Activated CD4-positive, alpha-beta T cell treated with anti-CD3 and anti-CD28 coated beads for 36 hours (primary cell): ENCODE measurements at regions of chr19 and their contacts with region 1.

Region 1: DNA sequence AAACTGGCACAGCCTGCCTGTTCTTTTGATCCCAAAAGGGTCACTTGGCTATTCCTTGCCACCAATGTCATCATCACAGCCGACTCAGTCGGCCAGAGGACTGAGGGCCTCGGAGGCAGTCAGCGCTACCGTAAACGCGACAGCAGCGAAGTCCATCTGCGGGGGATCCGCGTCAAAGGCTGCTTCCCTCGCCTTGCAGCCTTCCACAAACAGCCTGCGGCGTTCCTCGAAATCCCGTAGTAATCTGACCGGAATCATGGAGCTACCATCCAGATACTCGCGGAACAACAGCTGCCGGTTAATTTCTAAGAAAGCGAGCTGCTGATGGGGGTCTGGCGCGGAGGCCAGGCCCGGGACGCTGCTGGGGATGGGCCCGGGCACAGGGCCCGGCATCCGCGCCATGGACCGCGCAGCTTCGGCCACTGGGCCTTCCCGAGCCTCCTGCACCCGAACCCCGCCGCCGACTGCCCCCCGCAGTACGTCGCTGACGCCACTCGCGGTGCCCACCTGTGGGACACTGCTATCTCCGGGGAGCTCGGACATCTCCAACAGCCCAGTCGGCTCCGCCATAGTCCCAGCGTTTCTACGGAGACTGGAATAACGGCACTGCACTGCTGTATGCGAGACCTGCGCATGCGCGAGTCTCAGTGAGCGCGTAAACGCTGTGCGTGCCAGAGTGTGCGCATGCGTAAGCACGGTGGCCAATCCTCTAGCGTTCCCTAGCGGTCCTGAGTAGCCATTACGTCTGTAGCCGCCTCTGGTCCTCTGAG is at the start of gene EID2B:
- DNase-seq: peak; percentile 97
- ATAC-seq: peak; percentile 97
- H3K4me3 Mint-ChIP-seq: peak within 1 kb of the TSS; percentile 93
- H3K27ac Mint-ChIP-seq: peak within 1 kb of the TSS; percentile 86
- H3K4me1 Mint-ChIP-seq: peaks cover 26% of the 10 kb centered on the region
- H3K27me3 Mint-ChIP-seq: no peaks in the 10 kb centered on the region
- total RNA-seq, gene EID2B: 1.4 to 3.5 TPM

Region 2: GRCh38 chr19:39212375-39212742 is 320.1 kb before region 1 on chr19:
- CTCF ChIA-PET with region 1: interaction called, 3 read pairs
- POLR2A ChIA-PET with region 1: no interaction called
- intact Hi-C with region 1: loop called in 1 of 2 experiments (anchors 5 kb)
- DNase-seq: peak; percentile 86
- ATAC-seq: peak; percentile 100
- H3K4me3 Mint-ChIP-seq: no peak overlapping the region
- H3K27ac Mint-ChIP-seq: no peak overlapping the region
- H3K4me1 Mint-ChIP-seq: no peaks in the 10 kb centered on the region
- H3K27me3 Mint-ChIP-seq: peaks cover 9% of the 10 kb centered on the region

Region 3: GRCh38 chr19:39390755-39391592 is 141.4 kb before region 1 on chr19 and contains the starts of genes MED29 and PAF1:
- CTCF ChIA-PET with region 1: interaction called, 10 read pairs
- POLR2A ChIA-PET with region 1: no interaction called
- intact Hi-C with region 1: loop called in 1 of 2 experiments (anchors 1 kb)
- DNase-seq: peak; percentile 98
- ATAC-seq: peak; percentile 97
- H3K4me3 Mint-ChIP-seq: peak within 1 kb of the TSS; percentile 99
- H3K27ac Mint-ChIP-seq: peak within 1 kb of the TSS; percentile 98
- H3K4me1 Mint-ChIP-seq: peaks cover 28% of the 10 kb centered on the region
- H3K27me3 Mint-ChIP-seq: no peaks in the 10 kb centered on the region
- total RNA-seq, gene MED29: 24.0 to 34.6 TPM
- total RNA-seq, gene PAF1: 40.4 to 54.2 TPM

Region 4: DNA sequence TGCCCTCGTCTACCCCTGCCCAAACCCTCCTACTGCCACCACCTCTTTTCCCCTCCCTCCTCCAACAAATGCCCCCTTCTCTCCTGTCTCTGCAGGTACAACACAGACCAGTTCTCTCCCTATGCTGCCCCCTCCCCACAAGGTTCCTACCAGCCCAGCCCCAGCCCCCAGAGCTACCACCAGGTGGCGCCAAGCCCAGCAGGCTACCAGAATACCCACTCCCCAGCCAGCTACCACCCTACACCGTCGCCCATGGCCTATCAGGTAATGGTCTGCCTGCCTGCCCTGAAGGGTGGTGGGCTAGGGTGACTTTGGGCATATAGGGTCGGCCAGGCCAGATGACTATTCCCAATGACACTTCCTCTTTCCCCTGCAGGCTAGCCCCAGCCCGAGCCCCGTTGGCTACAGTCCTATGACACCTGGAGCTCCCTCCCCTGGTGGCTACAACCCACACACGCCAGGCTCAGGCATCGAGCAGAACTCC is 58.2 kb before region 1 on chr19:
- CTCF ChIA-PET with region 1: interaction called, 27 read pairs
- POLR2A ChIA-PET with region 1: interaction called, 3 read pairs
- intact Hi-C with region 1: loop called (anchors 1 kb)
- DNase-seq: peak; percentile 84
- ATAC-seq: peak; percentile 84
- H3K4me3 Mint-ChIP-seq: no peak overlapping the region
- H3K27ac Mint-ChIP-seq: no peak overlapping the region
- H3K4me1 Mint-ChIP-seq: peaks cover 17% of the 10 kb centered on the region
- H3K27me3 Mint-ChIP-seq: no peaks in the 10 kb centered on the region

Region 5: DNA sequence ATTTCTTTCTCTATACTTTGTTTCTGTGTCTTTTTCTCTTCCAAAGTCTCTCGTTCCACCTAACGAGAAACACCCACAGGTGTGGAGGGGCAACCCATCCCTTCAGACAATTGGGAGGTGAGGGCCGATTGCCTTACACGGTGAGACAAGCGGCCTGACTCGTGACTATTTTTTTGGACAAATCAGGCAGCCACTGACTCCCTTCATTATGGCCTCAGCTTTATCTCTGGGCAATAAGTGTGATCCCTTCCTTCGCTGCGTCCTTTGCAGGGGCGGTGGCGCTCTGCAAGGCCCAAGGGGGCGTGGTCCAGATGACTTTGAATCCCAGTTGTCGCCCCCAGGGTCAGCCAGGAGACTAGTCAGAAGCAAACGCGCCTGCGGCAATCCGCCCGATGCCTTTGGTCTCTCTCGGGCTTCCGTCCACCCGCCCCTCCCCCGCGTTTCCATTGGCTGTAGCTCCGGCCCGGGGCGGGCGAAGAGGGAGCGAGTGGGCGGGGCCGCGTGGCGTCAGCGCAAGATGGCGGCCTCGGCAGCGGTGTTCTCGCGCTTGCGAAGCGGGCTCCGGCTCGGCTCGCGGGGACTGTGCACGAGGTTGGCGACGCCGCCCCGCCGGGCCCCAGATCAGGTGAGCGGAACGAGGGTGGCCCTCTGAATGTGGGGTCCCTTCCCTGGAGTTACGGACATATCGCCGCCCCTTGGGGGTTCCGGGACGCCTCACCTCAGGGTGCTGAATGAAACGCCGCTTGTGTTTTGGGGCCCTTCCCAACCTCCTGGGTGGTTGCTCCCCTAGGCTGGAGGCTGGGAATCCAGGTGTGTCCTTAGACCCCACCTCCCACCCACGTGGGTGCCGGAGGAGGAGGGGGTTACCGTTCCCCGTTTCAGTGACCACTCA is 51.8 kb before region 1 on chr19 and contains the start of gene TIMM50:
- CTCF ChIA-PET with region 1: interaction called, 27 read pairs
- POLR2A ChIA-PET with region 1: interaction called, 3 read pairs
- intact Hi-C with region 1: loop called in 1 of 2 experiments (anchors 1 kb)
- DNase-seq: peak; percentile 100
- ATAC-seq: peak; percentile 94
- H3K4me3 Mint-ChIP-seq: peak within 1 kb of the TSS; percentile 95
- H3K27ac Mint-ChIP-seq: peak within 1 kb of the TSS; percentile 92
- H3K4me1 Mint-ChIP-seq: peaks cover 24% of the 10 kb centered on the region
- H3K27me3 Mint-ChIP-seq: no peaks in the 10 kb centered on the region
- total RNA-seq, gene TIMM50: 99.4 to 126 TPM

Region 6: DNA sequence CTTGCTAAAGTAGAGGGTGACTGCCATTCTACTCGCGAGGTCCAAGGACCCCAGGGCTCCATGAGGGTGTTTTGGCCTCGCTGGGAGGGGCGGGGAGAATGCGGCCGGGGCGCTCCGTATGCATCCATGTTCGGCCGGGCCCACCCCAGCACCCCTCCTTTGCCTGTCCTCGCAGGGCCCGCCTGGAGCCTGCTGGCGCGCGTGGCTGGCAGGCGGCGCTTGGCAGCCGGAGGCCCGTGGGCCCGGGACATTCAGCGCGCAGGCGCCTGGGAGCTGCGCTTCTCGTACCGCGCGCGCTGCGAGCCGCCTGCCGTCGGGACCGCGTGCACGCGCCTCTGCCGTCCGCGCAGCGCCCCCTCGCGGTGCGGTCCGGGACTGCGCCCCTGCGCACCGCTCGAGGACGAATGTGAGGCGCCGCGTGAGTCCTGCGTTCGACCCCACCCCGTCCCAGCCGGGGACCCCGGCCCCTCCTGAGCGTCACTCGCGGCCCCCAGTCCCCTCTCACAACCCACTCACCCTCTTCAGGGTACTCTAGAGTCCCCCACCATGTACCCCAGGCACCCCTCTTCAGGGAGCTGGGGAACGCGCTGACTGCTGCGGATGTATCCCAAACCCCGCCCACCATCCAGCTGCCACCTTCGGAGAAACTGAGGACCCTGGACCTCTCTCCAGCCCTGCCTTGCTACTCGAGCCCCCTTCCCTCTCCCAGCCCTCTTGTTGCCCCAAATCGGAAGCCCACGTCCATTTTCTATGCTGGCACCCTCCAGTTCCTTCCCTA is 29.6 kb before region 1 on chr19:
- CTCF ChIA-PET with region 1: interaction called, 9 read pairs
- POLR2A ChIA-PET with region 1: no interaction called
- intact Hi-C with region 1: loop called (anchors 1 to 5 kb)
- DNase-seq: peak; percentile 89
- ATAC-seq: peak; percentile 48
- H3K4me3 Mint-ChIP-seq: no peak overlapping the region
- H3K27ac Mint-ChIP-seq: no peak overlapping the region
- H3K4me1 Mint-ChIP-seq: peaks cover 29% of the 10 kb centered on the region
- H3K27me3 Mint-ChIP-seq: peaks cover 55% of the 10 kb centered on the region